Aorta (tissue), 5 donors: ENCODE measurements at regions of chr2 and their contacts with region 1.

Region 1: GRCh38 chr2:120779781-120780283 is 44.2 kb downstream of the GLI2 start:
- DNase-seq: no peak
- ATAC-seq: no peak
- H3K4me3 ChIP-seq: no peak overlapping the region
- H3K27ac ChIP-seq: no peak overlapping the region
- H3K4me1 ChIP-seq: no peaks in the 10 kb centered on the region
- H3K27me3 ChIP-seq: no peaks in the 10 kb centered on the region

Region 2: GRCh38 chr2:120745420-120746111 is 34.3 kb before region 1 on chr2:
- intact Hi-C with region 1: loop called in 1 of 2 experiments (anchors 1 kb)
- DNase-seq: no peak
- ATAC-seq: no peak
- H3K4me3 ChIP-seq: no peak overlapping the region
- H3K27ac ChIP-seq: no peak overlapping the region
- H3K4me1 ChIP-seq: no peaks in the 10 kb centered on the region
- H3K27me3 ChIP-seq: no peaks in the 10 kb centered on the region